ENCODE measurements at regions of chr3 and their contacts with region 1.

Region 1: DNA sequence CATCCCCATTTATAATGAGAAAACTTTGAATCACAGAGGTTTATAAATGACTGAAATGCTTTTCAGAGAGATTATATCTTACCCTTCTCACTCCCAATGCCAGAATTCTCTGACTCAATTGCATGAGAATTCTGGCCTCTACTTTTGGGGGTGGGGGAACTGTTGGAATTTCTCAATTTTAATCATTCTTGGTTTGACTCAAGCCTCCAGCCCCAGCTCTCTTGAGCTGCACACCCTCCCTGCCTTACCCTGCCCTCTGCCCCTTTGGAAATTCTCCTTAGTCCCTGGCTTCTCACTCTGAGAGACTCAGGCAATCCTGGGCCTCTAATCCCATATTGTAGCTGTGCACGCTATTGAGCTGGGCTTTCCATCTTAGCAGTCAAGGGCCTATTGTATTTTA is 44.2 kb downstream of the ZNF589 start:
- DNase-seq: peak; percentile 21
- H3K4me3 ChIP-seq: no peak overlapping the region
- CTCF ChIP-seq: no peak

Region 2: GRCh38 chr3:48273594-48274211 is 11.4 kb before region 1 on chr3:
- CTCF ChIA-PET with region 1: interaction called, 21 read pairs
- POLR2A ChIA-PET with region 1: no interaction called
- DNase-seq: no peak
- H3K4me3 ChIP-seq: no peak overlapping the region
- CTCF ChIP-seq: peak; percentile 76

Region 3: GRCh38 chr3:48388966-48389365 is 103.8 kb after region 1 on chr3:
- CTCF ChIA-PET with region 1: no interaction called
- POLR2A ChIA-PET with region 1: no interaction called
- DNase-seq: no peak
- H3K4me3 ChIP-seq: no peak overlapping the region
- CTCF ChIP-seq: no peak

Measured in AG04449 (cell line).